GM12878 (cell line): ENCODE measurements at regions of chr20 and their contacts with region 1.

Region 1: GRCh38 chr20:63309261-63310071 is 16.5 kb downstream of the COL20A1 start:
- DNase-seq: no peak
- ATAC-seq: peak; percentile 76
- H3K4me3 ChIP-seq: no peak overlapping the region
- H3K27ac ChIP-seq: no peak overlapping the region
- H3K4me1 ChIP-seq: no peaks in the 10 kb centered on the region
- H3K27me3 ChIP-seq: no peaks in the 10 kb centered on the region
- CTCF ChIP-seq: peak; percentile 37 to 67 (median 49); a peak in 5 of 6 replicates
- EP300 ChIP-seq: no peak
- POLR2A ChIP-seq: no peak
- RAD21 ChIP-seq: 0 out of 2 replicates have a peak, but pooled peaks have one; percentile 28

Region 2: GRCh38 chr20:62999580-62999979 is 309.9 kb before region 1 on chr20:
- CTCF ChIA-PET with region 1: no interaction called
- POLR2A ChIA-PET with region 1: no interaction called
- RAD21 ChIA-PET with region 1: no interaction called
- SMC1A ChIA-PET with region 1: no interaction called
- in situ Hi-C with region 1: no loop called
- intact Hi-C with region 1: no loop called
- DNase-seq: no peak
- ATAC-seq: no peak; the same call in 2 of the 3 replicates
- H3K4me3 ChIP-seq: no peak overlapping the region
- H3K27ac ChIP-seq: no peak overlapping the region
- H3K4me1 ChIP-seq: no peaks in the 10 kb centered on the region
- H3K27me3 ChIP-seq: peaks cover 4 to 10% of the 10 kb centered on the region in 2 experiments
- CTCF ChIP-seq: no peak
- EP300 ChIP-seq: no peak
- POLR2A ChIP-seq: no peak
- RAD21 ChIP-seq: no peak

Region 3: DNA sequence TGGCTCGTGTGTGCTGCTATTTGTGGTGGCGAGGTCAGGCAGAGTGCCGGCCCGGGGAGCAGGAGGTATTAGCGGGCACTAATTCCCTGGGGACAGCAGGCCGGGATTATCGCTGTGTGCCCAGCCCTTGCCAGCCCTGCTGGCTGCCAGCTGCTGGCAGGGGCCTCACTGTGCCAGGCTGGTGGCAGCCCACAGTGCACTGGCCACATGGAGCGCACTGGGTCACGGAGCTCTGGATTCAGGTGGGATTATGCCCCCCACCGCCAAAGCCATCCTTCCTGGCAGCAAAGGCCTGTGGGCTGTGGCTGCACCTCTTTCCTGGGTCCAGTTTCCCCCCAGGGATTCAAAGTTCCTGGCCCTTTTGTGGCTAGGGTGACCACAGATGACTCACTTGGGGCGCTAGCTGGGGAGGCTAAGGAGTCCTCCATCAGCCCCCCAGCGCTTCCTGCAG is 153.2 kb before region 1 on chr20:
- CTCF ChIA-PET with region 1: no interaction called
- POLR2A ChIA-PET with region 1: no interaction called
- RAD21 ChIA-PET with region 1: no interaction called
- SMC1A ChIA-PET with region 1: no interaction called
- in situ Hi-C with region 1: no loop called
- intact Hi-C with region 1: no loop called
- DNase-seq: no peak
- ATAC-seq: no peak
- H3K4me3 ChIP-seq: no peak overlapping the region
- H3K27ac ChIP-seq: no peak overlapping the region
- H3K4me1 ChIP-seq: no peaks in the 10 kb centered on the region
- H3K27me3 ChIP-seq: peaks cover 0 to 5% of the 10 kb centered on the region in 2 experiments; a peak in 2 of 4 replicates
- CTCF ChIP-seq: no peak
- EP300 ChIP-seq: no peak
- POLR2A ChIP-seq: no peak
- RAD21 ChIP-seq: no peak

Region 4: DNA sequence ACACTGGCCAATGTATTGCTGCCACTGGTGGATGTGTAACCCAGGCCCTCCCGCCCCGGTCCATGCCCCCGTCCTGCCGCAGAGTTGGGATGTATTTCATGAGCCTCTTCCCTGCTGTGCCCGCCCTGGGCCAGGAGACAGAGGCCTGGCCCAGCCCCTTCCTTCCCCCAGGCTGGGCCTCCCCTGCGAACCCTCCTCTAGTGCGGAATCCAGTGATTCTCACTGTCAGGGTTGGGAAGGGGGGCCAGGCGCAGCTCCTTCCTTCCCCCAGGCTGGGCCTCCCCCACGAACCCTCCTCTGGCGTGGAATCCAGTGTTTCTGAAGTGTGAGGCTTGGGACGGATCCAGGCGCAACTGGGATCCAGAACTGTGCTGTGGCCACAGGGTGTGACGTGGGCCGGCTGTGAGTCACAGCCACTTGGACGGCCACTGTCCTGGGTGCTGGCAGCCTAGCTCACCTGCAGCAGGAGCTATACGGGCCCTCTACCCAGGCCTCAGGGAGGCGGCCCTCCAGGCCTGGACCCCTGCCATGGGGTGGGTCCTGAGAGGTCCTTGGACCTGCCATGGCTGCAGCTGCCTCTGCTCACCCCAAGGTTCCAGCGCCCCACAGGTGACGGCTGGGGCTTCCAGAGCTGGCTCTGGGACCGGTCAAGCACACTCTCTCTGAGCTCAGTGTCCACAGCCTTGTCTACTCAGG is 11.8 kb after region 1 on chr20:
- CTCF ChIA-PET with region 1: no interaction called
- POLR2A ChIA-PET with region 1: no interaction called
- RAD21 ChIA-PET with region 1: no interaction called
- SMC1A ChIA-PET with region 1: no interaction called
- in situ Hi-C with region 1: no loop called
- intact Hi-C with region 1: no loop called
- DNase-seq: no peak
- ATAC-seq: no peak
- H3K4me3 ChIP-seq: no peak overlapping the region
- H3K27ac ChIP-seq: no peak overlapping the region
- H3K4me1 ChIP-seq: peaks cover under 1% of the 10 kb centered on the region; the same call in 1 of the 2 replicates
- H3K27me3 ChIP-seq: no peaks in the 10 kb centered on the region
- CTCF ChIP-seq: no peak
- EP300 ChIP-seq: no peak
- POLR2A ChIP-seq: no peak
- RAD21 ChIP-seq: no peak

Region 5: GRCh38 chr20:63381807-63382322 is 72.4 kb after region 1 on chr20:
- CTCF ChIA-PET with region 1: interaction called, 12 read pairs
- POLR2A ChIA-PET with region 1: no interaction called
- RAD21 ChIA-PET with region 1: interaction called, 6 read pairs
- SMC1A ChIA-PET with region 1: interaction called, 4 read pairs
- in situ Hi-C with region 1: no loop called
- intact Hi-C with region 1: no loop called
- DNase-seq: no peak
- ATAC-seq: peak; percentile 54
- H3K4me3 ChIP-seq: no peak overlapping the region
- H3K27ac ChIP-seq: no peak overlapping the region
- H3K4me1 ChIP-seq: no peaks in the 10 kb centered on the region
- H3K27me3 ChIP-seq: no peaks in the 10 kb centered on the region
- CTCF ChIP-seq: peak; percentile 73 to 85 (median 79)
- EP300 ChIP-seq: no peak
- POLR2A ChIP-seq: no peak
- RAD21 ChIP-seq: peak; percentile 72

Region 6: DNA sequence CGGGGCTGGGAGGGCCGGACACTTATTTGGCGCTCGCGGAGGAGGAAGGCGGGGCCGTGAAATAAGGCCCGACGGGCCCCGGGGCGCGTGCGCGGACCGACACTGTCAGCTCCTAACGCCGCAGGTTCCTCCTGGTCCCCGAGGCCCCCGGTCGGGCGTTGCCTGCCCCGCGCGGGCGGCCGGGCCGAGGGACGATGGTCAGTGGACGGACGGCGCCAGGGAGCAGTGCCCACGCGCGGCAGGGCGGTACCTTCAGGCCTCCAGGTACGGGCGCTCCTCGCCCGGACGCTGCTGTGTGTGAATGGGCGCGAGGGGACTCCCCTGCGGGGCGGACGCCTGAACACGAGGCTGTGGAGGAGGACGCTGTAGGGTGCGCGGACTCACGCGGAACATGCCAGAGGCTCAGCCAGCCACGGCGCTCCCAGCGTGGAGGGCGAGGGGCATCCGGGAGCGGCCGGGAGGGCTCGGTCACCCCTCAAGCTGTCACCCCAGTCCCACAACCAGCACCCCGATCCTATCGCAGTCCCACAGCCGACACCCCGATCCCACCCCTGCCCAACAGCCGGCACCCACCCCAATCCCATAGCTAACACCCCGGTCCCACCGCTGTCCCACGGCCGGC is 317.8 kb after region 1 on chr20:
- CTCF ChIA-PET with region 1: no interaction called
- POLR2A ChIA-PET with region 1: no interaction called
- RAD21 ChIA-PET with region 1: no interaction called
- SMC1A ChIA-PET with region 1: no interaction called
- in situ Hi-C with region 1: no loop called
- intact Hi-C with region 1: no loop called
- DNase-seq: peak; percentile 57
- ATAC-seq: peak; percentile 84
- H3K4me3 ChIP-seq: peak overlapping the region; percentile 94
- H3K27ac ChIP-seq: peak overlapping the region; percentile 73
- H3K4me1 ChIP-seq: peaks cover 8% of the 10 kb centered on the region
- H3K27me3 ChIP-seq: no peaks in the 10 kb centered on the region
- CTCF ChIP-seq: no peak
- EP300 ChIP-seq: no peak
- POLR2A ChIP-seq: peak; percentile 92
- RAD21 ChIP-seq: no peak